ENCODE measurements at regions of chr1 and their contacts with region 1.

Region 1: DNA sequence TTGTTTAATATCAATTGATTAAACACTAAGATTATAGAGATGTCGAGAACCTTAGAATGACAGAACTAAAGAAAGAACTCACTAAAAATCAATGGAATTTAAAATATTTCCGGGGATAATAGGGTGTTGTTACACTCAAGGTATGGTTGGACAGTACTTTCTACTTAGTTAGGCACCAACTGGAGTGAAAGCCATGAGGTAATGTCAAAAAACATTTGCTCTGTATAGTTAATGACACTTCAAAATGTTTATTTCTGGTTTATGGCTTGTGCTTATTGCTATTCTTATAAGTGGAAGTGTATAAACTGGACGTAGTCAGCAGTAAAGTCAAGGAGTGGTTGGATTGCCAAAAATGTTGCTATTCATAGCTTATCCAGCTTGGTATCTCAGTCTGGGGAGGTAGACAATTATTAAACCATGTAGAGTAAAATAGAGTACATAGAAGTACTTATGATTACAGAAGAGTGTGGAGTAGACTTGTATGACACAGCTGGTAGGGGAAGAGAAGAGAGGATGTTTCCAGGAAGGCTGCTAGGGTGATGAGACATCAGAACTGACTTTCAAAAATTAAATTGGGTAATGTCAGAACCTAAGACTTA is 56.5 kb upstream of the BMP8A start:
- DNase-seq: no peak
- ATAC-seq: no peak
- H3K4me3 ChIP-seq: no peak overlapping the region
- H3K27ac ChIP-seq: no peak overlapping the region
- H3K4me1 ChIP-seq: no peaks in the 10 kb centered on the region
- H3K27me3 ChIP-seq: no peaks in the 10 kb centered on the region

Region 2: GRCh38 chr1:39469150-39469549 is 34.3 kb after region 1 on chr1:
- intact Hi-C with region 1: loop called in 1 of 2 experiments (anchors 5 kb)
- DNase-seq: no peak
- ATAC-seq: no peak
- H3K4me3 ChIP-seq: no peak overlapping the region
- H3K27ac ChIP-seq: no peak overlapping the region
- H3K4me1 ChIP-seq: peaks cover 0 to 3% of the 10 kb centered on the region in 2 donors
- H3K27me3 ChIP-seq: no peaks in the 10 kb centered on the region